ENCODE measurements at regions of chr12 and their contacts with region 1.

Region 1: GRCh38 chr12:57744777-57745484 is at the start of gene TSPAN31:
- DNase-seq: peak; percentile 79
- H3K4me3 ChIP-seq: peak within 1 kb of the TSS; percentile 44
- H3K27ac ChIP-seq: no peak within 1 kb of the TSS
- H3K4me1 ChIP-seq: peaks cover 40% of the 10 kb centered on the region
- CTCF ChIP-seq: no peak
- total RNA-seq, gene TSPAN31: 0.80 and 2.4 TPM in 2 replicates

Region 2: DNA sequence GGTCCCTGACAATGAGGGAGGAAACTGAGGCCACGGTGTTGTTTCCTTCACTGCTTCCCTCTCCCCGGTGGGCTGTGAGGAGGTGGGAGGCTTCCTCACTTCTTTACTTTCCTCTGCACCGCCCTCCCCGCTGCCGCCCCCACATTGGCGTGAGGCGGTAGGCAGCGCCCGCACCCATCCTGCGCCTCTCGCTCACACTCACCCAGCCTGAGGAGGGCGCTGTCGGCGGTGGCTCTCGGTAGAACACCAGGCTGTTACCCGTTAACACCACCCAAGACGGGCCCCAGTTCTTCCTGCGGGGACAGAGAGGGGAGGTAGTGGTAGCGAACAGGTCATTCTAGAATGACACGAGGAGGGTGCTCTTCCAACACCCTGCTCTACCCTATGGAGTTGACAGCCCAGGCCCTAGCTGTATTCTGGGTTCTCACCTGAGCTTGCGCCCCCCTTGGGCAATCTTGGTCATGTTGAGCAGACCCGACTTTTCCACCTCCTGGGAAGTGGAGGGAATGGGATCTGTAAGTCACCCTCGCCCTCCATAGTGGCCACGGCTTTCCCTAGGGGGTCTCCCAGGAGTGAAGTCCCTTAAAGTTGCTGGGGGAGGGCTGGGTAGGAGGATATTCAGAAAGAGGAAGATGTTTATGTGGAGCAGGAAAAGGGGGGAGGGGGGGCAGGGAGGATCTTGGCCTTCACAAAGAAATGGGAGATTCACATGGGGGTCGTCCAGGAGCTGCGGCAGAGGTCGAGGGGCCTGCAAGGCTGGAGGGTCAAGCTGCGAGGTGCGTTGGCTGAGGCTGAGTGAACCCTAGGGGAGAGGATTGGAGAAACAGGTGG is 268.6 kb before region 1 on chr12:
- CTCF ChIA-PET with region 1: no interaction called
- POLR2A ChIA-PET with region 1: interaction called, 3 read pairs
- intact Hi-C with region 1: loop called (anchors 5 kb)
- DNase-seq: peak; percentile 72
- H3K4me3 ChIP-seq: peak overlapping the region; percentile 76
- H3K27ac ChIP-seq: peak overlapping the region; percentile 91
- H3K4me1 ChIP-seq: peaks cover 54% of the 10 kb centered on the region
- CTCF ChIP-seq: peak; percentile 91

Region 3: DNA sequence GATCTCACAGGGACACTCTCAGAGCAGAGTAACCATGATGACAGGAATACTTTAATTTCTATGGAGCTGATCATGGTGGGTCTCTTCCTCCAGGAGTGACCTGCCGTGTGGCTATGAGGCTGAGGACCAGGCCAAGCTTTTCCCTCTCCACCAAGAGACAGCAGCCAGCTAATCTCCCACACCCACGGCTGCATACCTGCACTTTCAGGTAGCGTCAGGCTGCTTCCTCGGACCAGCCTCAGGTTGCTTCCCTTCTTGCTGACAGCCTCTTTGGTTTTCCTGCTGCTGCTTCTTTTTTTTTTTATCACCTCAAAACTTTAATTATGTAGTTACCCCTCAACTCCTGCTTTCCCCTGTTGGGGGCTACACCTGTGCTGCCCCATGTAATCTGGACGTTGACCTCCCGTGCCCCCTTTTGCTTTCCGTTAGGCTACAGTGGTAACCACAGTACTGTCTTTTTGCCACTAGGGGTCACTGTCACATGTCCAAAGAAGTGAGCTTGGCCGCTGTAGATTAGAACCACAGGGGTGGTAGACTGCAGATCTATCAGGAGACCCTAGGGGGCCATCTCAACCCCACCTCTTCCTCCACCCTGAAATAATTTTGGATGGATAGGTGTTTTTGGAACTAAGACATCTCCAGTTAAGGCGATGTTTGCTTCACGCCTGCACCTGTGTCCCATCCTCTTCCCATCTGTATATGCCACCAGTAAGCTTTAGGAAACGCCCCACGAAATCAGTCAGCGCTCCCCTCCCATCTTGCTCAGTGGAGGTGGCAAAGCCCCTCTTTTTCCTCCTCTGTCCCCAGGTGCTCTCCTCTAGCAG is 161.7 kb before region 1 on chr12:
- CTCF ChIA-PET with region 1: no interaction called
- POLR2A ChIA-PET with region 1: no interaction called
- intact Hi-C with region 1: loop called (anchors 1 kb)
- DNase-seq: peak; percentile 94
- H3K4me3 ChIP-seq: no peak overlapping the region
- H3K27ac ChIP-seq: no peak overlapping the region
- H3K4me1 ChIP-seq: no peaks in the 10 kb centered on the region
- CTCF ChIP-seq: peak; percentile 100

Region 4: DNA sequence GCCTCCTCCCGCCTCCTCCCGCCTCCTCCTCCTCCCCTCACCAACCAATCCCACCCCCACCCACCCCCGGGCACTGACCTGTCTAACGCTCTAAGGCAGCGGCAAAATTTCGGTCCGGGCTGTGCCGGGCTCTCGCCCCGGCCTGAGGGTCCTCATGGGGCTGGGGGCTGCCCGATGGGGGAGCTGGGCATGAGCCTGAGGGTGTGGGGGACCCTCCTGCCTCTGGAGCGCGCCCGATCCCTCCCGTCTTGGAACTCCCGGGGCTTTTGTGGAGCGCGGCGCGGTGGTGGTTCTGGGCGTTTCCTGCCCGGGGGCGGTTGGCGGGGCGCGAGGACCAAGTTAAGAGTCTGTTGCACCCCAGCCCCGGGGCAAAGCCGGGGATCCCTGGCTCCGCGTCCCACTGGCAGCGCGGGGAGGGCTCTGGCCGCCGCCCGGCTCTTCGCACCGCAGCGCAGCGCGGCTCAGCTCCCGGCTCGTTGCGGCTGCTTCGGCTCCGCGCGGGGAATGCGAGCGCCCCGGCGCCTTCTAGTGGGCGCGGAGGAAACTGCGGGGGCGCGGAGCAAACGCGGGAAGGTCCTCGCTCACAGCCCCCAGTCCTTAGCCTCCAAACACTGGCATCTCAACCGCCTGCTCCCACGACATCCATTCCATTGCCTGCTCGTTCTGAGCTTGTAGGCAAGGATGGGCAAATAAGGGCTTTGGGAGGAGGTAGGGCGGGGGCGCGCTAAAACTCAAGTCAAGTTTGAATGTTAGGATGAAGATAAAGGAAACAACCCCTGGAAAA is 112.0 kb before region 1 on chr12 and contains the start of gene B4GALNT1:
- CTCF ChIA-PET with region 1: no interaction called
- POLR2A ChIA-PET with region 1: interaction called, 3 read pairs
- intact Hi-C with region 1: loop called (anchors 1 kb)
- DNase-seq: peak; percentile 78
- H3K4me3 ChIP-seq: peak within 1 kb of the TSS; percentile 58
- H3K27ac ChIP-seq: no peak within 1 kb of the TSS
- H3K4me1 ChIP-seq: no peaks in the 10 kb centered on the region
- CTCF ChIP-seq: peak; percentile 87
- total RNA-seq, gene B4GALNT1: 1.1 and 1.2 TPM in 2 replicates

Region 5: DNA sequence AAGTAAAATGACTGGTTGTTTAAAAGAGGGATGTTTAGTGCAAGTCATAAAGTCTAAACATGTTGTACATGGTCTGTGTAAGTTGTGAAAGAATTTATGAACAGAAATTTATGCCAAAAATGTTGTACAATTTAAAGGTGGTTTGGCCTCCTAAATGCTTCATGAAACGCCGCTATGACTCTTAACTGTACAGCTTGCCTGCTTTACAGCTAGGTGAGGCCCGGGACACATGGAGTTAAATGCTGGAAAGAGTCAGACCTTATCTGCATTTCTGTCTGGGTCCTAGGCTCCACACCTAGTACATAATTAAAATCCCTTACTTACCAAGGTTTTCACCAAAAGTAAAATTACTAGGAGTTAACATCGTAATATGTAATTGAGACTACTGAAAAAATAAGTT is 83.6 kb before region 1 on chr12:
- CTCF ChIA-PET with region 1: no interaction called
- POLR2A ChIA-PET with region 1: no interaction called
- intact Hi-C with region 1: no loop called
- DNase-seq: peak; percentile 7
- H3K4me3 ChIP-seq: no peak overlapping the region
- H3K27ac ChIP-seq: no peak overlapping the region
- H3K4me1 ChIP-seq: no peaks in the 10 kb centered on the region
- CTCF ChIP-seq: no peak

Region 6: DNA sequence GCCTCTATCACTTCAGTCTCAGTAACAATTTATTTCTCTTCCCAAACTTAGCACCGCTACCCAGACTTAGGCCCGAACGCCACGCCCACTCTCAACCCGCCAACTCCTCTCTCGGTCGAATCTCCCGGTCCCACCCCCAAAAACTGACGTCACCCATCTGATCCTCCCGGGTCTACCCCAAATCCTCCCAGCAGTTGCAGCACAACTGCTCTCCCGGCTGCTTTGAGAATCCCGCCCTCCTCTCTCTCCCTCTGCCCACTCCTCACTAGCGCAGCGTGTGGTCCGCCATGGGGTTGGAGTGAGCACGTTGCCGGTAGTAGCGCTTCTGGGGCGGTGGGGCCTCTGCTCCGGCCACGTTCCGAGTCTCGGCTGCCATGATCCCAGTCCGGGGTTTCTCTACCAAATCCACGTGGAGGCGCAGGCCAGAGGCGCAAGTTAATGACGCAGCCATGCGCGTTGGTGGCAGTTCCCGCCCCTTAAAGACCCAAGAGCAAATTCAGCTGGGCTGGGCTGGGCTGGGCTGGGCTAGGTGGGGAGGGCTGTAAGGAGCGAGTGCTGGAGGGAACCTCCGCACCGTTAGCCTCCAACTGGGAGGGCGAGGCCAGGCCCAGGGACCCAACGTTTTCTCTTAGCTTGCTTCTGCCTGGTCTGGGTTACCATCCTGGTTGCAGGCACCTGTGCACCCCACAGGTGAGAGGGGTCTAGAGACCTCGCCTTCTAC is 26.9 kb after region 1 on chr12 and contains the start of gene METTL1:
- CTCF ChIA-PET with region 1: no interaction called
- POLR2A ChIA-PET with region 1: no interaction called
- intact Hi-C with region 1: no loop called
- DNase-seq: peak; percentile 96
- H3K4me3 ChIP-seq: peak within 1 kb of the TSS; percentile 81
- H3K27ac ChIP-seq: peak within 1 kb of the TSS; percentile 70
- H3K4me1 ChIP-seq: peaks cover 25% of the 10 kb centered on the region
- CTCF ChIP-seq: no peak
- total RNA-seq, gene METTL1: 12.5 and 22.2 TPM in 2 replicates

Region 7: DNA sequence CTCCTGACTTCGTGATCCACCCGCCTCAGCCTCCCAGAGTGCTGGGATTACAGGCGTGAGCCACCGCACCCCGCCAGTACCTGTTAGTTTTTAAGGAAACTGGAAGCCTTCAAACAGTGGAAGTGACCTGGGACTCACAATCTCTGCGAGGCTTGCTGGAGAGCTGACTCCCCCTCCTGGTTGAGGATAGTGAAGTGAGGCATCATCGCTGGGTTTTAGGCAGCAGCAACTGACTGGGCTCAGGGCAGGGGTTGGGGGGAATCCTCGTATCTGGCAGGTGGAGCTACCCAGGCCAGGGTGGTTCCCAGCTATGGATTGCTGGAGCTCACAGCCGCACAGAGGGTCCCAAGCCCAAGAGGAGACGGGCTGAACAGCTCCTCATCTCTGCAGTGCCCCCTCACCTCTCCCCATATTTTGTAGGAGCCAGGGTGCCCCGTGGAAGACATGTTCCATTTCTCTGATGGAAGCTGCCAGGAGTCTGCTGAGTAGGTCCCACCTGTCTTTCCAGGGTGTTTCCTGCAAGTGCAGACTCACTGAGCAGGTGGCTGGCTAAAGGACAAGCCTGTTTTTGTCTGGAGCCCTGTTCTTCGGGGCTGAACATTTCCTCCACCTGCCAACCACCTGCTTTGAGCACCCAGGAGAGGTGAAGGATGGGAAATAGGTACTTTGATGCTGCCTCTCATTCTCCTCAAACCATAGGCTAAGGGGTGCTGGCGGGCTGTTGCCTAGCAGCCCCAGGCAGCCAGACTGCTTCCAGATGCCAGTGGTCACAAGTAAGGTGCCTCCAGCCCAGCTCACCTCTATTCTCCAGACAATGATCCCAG is 70.5 kb after region 1 on chr12:
- CTCF ChIA-PET with region 1: no interaction called
- POLR2A ChIA-PET with region 1: no interaction called
- intact Hi-C with region 1: no loop called
- DNase-seq: no peak
- H3K4me3 ChIP-seq: no peak overlapping the region
- H3K27ac ChIP-seq: no peak overlapping the region
- H3K4me1 ChIP-seq: no peaks in the 10 kb centered on the region
- CTCF ChIP-seq: 0 out of 2 replicates have a peak, but pooled peaks have one; percentile 16

Region 8: DNA sequence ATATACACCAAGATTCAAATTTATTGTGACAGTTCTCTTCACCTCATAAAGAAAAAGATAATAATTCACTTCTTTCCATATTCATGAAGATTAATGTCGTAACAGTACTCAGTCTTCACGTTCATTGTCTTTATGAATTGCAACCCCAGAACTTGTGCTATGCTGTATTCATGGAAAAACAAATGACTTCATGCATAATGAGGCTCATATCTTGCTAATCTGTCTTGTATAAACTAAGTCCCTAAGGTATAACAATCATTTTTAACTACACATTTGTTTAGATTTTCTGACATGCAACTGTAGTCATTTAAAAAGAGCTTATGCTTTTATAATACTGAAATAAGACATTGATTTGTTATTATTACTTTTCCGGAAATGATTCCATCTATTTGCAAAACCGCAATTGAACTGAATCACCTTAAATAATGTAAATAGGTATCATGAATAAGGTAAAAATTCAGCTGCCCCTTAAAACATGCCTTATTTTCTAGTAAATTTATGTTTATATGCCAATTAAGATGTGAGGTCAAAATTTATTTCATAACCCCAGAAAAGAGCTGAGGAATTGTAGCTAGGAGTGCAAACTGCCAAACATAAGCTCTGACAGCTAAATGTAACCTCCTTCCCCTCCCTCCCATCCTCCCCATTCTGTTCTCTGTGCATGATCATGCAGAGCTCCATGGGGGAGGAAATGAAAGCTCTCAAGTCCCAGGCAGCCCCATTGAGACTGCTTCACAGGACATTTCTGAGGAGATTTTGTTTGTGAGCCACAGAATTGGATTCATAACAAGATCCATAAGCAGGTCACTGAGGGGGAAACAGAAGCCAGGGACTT is 498.1 kb after region 1 on chr12:
- CTCF ChIA-PET with region 1: no interaction called
- POLR2A ChIA-PET with region 1: no interaction called
- intact Hi-C with region 1: no loop called
- DNase-seq: no peak
- H3K4me3 ChIP-seq: no peak overlapping the region
- H3K27ac ChIP-seq: no peak overlapping the region
- H3K4me1 ChIP-seq: no peaks in the 10 kb centered on the region
- CTCF ChIP-seq: no peak

Measured in OCI-LY7 (cell line).